ENCODE measurements at regions of chr10 and their contacts with region 1.

Region 1: DNA sequence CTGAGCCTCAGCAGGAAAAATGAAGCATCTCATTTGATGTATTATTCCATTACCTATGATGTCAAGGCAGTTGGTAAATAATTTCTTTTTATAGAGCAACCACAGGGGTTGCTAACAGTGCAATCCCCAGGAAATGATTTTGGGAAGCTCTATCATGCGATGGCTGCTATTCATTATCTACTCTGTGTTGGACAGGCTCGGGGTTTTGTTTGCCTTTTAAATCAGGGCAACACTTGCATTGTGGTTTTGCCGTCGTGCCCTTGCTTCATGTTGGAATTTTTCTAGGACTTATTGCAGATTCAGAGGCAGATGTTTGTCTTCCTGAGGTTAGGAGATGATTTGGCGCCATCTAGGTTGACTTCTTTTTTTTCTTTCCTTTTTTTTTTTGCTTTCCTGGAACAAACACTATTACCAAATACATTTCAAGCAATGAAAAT is 128.4 kb downstream of the BICC1 start:
- DNase-seq: peak in 1 of 2 donors; percentile 6
- H3K4me3 ChIP-seq: no peak overlapping the region
- H3K27ac ChIP-seq: peak overlapping the region in 1 of 3 donors; percentile 12
- H3K4me1 ChIP-seq: no peaks in the 10 kb centered on the region
- H3K27me3 ChIP-seq: no peaks in the 10 kb centered on the region
- CTCF ChIP-seq: peak in 5 of 6 experiments; percentile 21 to 75 (median 37)
- POLR2A ChIP-seq: no peak

Region 2: DNA sequence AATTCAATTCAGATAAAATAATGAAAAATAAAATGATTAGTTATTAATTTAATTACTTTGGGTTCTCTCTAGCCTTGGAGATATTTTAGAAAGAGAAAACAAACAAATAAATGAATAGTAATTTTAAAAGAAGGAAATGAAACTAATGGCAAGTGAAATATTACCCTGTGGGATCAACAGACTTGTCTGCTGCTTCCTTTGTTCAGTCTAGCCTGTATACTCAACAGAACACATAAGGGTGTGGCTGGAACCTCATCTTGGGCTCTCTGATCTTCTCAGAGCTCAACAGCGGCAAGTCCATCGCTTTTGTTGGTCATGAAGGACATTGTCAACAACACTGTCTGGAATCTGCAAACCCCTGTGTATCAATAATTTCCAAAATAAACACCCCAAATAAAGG is 1278.3 kb before region 1 on chr10:
- intact Hi-C with region 1: no loop called
- DNase-seq: no peak
- H3K4me3 ChIP-seq: no peak overlapping the region
- H3K27ac ChIP-seq: no peak overlapping the region
- H3K4me1 ChIP-seq: no peaks in the 10 kb centered on the region
- H3K27me3 ChIP-seq: no peaks in the 10 kb centered on the region
- CTCF ChIP-seq: no peak
- POLR2A ChIP-seq: no peak

Region 3: DNA sequence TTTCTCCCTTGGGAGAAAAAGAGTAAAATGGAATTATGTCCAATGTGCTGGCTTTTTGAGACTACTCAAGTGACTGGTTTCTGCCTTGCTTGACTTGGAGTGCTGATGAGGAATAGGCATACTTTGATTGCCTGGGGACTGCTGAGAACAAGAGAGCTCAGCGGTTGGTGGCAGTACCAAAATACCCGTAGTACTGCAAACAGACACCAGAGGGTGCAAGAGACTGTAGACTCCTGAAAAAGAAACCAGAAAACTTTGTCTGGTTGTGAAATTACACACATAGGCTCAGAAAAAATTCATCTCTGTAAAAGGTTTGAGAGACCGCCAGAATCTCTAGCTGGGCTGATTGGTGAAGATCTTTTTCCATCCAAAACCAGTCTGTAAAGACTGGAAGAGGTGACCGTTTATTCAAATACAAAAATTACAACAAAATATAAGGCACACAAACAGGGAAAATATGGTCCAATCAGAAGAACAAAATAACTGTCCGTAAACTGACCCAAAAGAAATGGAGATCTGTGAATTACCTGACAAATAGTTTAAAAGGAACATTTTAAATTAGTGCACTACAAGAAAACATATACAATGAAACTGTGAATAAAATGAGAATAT is 109.9 kb before region 1 on chr10:
- intact Hi-C with region 1: loop called (anchors 5 kb)
- DNase-seq: peak; percentile 64 to 65
- H3K4me3 ChIP-seq: no peak overlapping the region
- H3K27ac ChIP-seq: no peak overlapping the region
- H3K4me1 ChIP-seq: no peaks in the 10 kb centered on the region
- H3K27me3 ChIP-seq: no peaks in the 10 kb centered on the region
- CTCF ChIP-seq: peak; percentile 48 to 85 (median 76)
- POLR2A ChIP-seq: no peak

Region 4: DNA sequence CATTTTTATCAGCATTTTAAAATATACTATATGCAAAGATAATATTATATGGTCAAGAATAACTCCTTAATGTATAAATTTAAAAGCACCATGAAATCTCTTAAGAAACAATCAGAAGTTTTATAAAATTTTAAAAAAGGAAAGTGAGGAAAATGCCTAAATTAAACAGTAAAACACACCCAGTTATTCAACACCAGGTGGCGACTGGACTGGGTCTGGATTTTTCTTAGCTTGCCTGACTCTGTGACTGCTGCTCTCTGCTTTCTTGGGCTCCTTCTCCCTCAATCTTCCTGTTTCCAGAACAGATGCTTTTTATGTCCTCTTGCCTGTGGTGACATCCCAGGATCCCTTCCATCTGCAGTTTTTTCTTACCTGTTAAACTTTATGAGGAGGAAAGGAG is 71.9 kb after region 1 on chr10:
- intact Hi-C with region 1: no loop called
- DNase-seq: no peak
- H3K4me3 ChIP-seq: no peak overlapping the region
- H3K27ac ChIP-seq: no peak overlapping the region
- H3K4me1 ChIP-seq: no peaks in the 10 kb centered on the region
- H3K27me3 ChIP-seq: no peaks in the 10 kb centered on the region
- CTCF ChIP-seq: no peak
- POLR2A ChIP-seq: no peak

Measured in thyroid gland (tissue), 4 donors.